PC-9 (cell line): ENCODE measurements at regions of chr3 and their contacts with region 1.

Region 1: GRCh38 chr3:122679085-122679881 is 1.4 kb upstream of the PARP14 start:
- DNase-seq: peak in 1 of 2 experiments; percentile 80
- H3K4me3 ChIP-seq: peak overlapping the region; percentile 91; the same call in 1 of the 2 replicates
- H3K27ac ChIP-seq: no peak overlapping the region
- H3K4me1 ChIP-seq: peaks cover 24% of the 10 kb centered on the region
- H3K27me3 ChIP-seq: no peaks in the 10 kb centered on the region
- CTCF ChIP-seq: peak; percentile 84

Region 2: GRCh38 chr3:122055215-122055614 is 624.1 kb before region 1 on chr3 and contains the start of gene CD86:
- CTCF ChIA-PET with region 1: no interaction called
- POLR2A ChIA-PET with region 1: no interaction called
- intact Hi-C with region 1: no loop called
- DNase-seq: no peak
- H3K4me3 ChIP-seq: no peak within 1 kb of the TSS
- H3K27ac ChIP-seq: no peak within 1 kb of the TSS
- H3K4me1 ChIP-seq: no peaks in the 10 kb centered on the region
- H3K27me3 ChIP-seq: no peaks in the 10 kb centered on the region
- CTCF ChIP-seq: no peak
- total RNA-seq, gene CD86: not detected in 2 replicates

Region 3: DNA sequence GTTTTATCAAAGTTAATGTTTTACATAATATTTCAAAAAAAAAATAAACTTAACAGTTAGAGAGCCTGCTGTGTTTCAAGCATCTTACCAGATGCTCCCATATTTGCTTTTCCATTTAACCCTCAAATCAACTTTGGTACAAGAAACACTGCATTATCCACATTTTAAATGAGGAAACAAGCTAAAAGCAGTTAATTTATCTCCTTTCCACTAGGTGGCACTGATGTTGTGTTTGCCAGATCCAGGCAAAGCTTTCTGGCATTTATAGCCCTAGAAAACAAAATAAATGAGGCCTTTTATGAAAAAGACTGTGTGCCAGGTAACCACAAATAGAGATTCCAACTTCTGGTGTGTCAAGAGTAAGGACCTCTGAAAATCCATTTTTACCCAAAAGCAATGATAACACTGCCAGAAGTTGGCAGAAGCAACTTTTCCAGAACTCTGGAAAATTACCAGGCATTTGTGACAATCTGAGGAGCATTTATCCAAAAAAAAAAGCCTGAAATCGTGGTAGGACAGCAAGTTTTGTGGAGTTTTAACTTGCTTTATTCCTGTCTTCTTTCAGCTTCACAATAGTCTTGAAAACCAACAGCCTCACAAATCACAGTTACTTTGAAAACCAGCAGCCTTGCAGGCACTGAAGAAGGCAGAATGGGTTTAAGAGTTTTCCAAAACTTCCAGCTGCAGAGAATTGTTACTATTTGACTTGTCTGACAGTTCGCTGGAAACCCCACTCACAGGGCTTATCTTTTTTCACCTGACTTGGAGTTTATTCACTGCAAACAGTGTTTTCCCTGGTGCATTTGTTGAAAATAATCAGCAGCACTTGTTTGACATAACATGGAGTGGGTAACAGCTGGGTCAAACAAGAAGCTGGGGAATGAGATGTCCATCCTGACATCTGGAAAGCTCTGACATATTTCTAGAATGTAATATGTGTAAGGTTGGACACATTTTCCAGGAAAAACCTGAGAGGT is 286.1 kb before region 1 on chr3:
- CTCF ChIA-PET with region 1: interaction called, 6 read pairs
- POLR2A ChIA-PET with region 1: interaction called, 10 read pairs
- intact Hi-C with region 1: loop called (anchors 1 kb)
- DNase-seq: peak in 1 of 2 experiments; percentile 9
- H3K4me3 ChIP-seq: no peak overlapping the region
- H3K27ac ChIP-seq: no peak overlapping the region
- H3K4me1 ChIP-seq: no peaks in the 10 kb centered on the region
- H3K27me3 ChIP-seq: no peaks in the 10 kb centered on the region
- CTCF ChIP-seq: peak; percentile 91

Region 4: DNA sequence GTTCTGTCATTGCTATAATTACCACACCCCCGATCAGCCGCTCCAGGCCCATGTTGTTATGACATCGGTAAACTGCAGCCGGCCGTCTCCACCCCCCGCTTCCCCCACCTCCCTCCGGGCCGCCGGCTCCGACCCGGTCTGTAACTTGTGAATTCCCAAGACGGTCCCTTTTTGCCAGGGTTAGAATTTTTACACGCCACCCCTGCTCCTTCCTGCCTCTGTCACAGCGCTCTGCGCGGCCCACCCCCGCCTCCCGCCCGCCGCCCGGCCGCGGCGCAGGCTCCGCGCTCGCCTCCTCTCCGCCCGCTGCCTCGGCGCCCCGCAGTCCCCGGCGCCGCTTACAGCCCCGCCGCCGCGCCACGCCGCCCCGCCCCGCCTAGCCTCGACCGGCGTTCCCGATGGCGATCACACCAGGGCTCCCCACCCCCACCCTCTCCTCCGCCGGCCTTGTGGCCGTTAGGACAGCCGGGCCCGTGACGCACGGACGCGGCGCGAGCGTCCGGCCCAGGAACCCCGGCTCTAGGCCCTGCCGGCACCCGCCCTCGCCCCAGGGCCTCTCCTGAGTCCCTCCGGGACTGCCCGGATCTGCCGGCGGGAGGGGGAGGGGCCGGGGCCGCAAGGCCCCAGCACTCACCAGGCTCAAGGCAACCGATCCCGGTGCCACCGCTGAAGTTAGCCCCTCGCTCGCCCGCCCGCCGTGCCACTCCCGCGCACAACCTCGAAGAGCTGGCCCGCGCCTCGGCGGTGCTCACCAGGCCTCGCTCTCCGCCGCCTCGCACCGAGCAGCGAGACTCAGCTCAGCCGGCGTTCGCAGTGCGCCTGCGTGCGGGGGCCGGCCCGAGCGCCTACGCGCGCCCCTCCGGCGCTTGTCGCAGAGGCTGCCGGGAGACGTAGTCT is 164.9 kb before region 1 on chr3 and contains the start of gene KPNA1:
- CTCF ChIA-PET with region 1: interaction called, 15 read pairs
- POLR2A ChIA-PET with region 1: no interaction called
- intact Hi-C with region 1: no loop called
- DNase-seq: peak; percentile 77 to 92
- H3K4me3 ChIP-seq: peak within 1 kb of the TSS; percentile 62
- H3K27ac ChIP-seq: peak within 1 kb of the TSS; percentile 81
- H3K4me1 ChIP-seq: peaks cover 26% of the 10 kb centered on the region
- H3K27me3 ChIP-seq: no peaks in the 10 kb centered on the region
- CTCF ChIP-seq: no peak
- total RNA-seq, gene KPNA1: 78.2 and 89.2 TPM in 2 replicates

Region 5: GRCh38 chr3:122714273-122714672 is 35.0 kb after region 1 on chr3:
- CTCF ChIA-PET with region 1: no interaction called
- POLR2A ChIA-PET with region 1: no interaction called
- intact Hi-C with region 1: no loop called
- DNase-seq: no peak
- H3K4me3 ChIP-seq: no peak overlapping the region
- H3K27ac ChIP-seq: no peak overlapping the region
- H3K4me1 ChIP-seq: no peaks in the 10 kb centered on the region
- H3K27me3 ChIP-seq: no peaks in the 10 kb centered on the region
- CTCF ChIP-seq: no peak

Region 6: DNA sequence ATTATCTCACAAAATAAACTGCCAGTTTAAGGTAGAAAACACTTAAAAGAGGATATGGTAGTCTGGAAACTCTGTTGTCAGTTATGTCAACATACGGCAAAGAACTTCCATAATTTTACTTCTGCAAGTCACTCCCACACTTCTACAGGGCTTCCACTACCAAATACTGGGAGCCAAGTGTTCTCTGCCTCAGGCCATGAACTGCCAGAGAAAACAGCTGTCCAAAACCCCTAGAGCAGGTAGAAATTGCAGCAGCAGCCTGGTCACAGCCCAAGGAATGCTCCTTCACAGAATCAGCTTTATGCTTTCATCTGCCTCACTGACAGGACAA is 88.7 kb after region 1 on chr3:
- CTCF ChIA-PET with region 1: no interaction called
- POLR2A ChIA-PET with region 1: no interaction called
- intact Hi-C with region 1: no loop called
- DNase-seq: no peak
- H3K4me3 ChIP-seq: no peak overlapping the region
- H3K27ac ChIP-seq: no peak overlapping the region
- H3K4me1 ChIP-seq: no peaks in the 10 kb centered on the region
- H3K27me3 ChIP-seq: no peaks in the 10 kb centered on the region
- CTCF ChIP-seq: no peak

Region 7: GRCh38 chr3:122793568-122794416 is 114.5 kb after region 1 on chr3 and contains the start of gene HSPBAP1:
- CTCF ChIA-PET with region 1: interaction called, 3 read pairs
- POLR2A ChIA-PET with region 1: no interaction called
- intact Hi-C with region 1: loop called (anchors 2 kb)
- DNase-seq: peak; percentile 88 to 91
- H3K4me3 ChIP-seq: peak within 1 kb of the TSS; percentile 80
- H3K27ac ChIP-seq: peak within 1 kb of the TSS; percentile 92
- H3K4me1 ChIP-seq: peaks cover 28% of the 10 kb centered on the region
- H3K27me3 ChIP-seq: no peaks in the 10 kb centered on the region
- CTCF ChIP-seq: no peak
- total RNA-seq, gene HSPBAP1: 8.9 and 10.9 TPM in 2 replicates

Region 8: DNA sequence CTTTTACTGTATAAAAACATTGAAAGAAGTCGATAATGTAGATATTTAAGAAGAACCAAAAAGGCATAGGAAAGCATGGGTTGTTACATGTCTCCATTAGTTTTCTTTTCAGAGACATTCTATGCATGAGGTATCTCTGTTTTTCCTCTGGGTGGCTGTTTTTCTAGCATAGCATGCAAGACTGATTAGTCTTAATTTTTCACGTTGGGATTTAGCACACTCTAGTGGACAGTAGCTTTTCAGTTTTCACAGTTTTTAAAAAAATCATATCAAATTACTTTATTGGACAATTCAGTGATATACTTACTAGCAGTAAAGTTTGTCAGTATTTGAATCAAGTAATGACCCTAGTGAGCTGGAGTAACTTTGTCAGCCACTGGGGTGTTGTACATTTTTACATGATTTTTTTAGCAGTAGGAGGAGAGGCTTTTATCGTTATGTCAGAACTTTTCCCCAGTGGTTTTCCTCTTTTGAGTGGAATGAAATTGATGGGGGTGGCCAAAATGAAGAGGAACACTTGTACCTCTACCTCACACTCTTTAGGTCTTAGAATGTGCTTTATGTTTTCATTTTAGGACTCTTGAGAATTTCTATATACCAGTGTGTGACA is 579.6 kb after region 1 on chr3:
- CTCF ChIA-PET with region 1: no interaction called
- POLR2A ChIA-PET with region 1: no interaction called
- intact Hi-C with region 1: loop called (anchors 5 kb)
- DNase-seq: peak in 1 of 2 experiments; percentile 57
- H3K4me3 ChIP-seq: no peak overlapping the region
- H3K27ac ChIP-seq: no peak overlapping the region
- H3K4me1 ChIP-seq: no peaks in the 10 kb centered on the region
- H3K27me3 ChIP-seq: no peaks in the 10 kb centered on the region
- CTCF ChIP-seq: peak; percentile 77